A549 (cell line): ENCODE measurements at regions of chr7 and their contacts with region 1.

Region 1: GRCh38 chr7:106542550-106543220 is 118.3 kb downstream of the CCDC71L start:
- DNase-seq: peak; percentile 25 to 75
- ATAC-seq: peak; percentile 89 to 97
- H3K4me3 ChIP-seq: no peak overlapping the region
- H3K27ac ChIP-seq: peak overlapping the region in 1 of 2 experiments; percentile 20; a peak in 2 of 6 replicates
- H3K4me1 ChIP-seq: peaks cover 6% of the 10 kb centered on the region; the same call in 1 of the 3 replicates
- CTCF ChIP-seq: peak; percentile 66
- EP300 ChIP-seq: no peak
- POLR2A ChIP-seq: no peak
- RAD21 ChIP-seq: peak; percentile 68 to 70

Region 2: GRCh38 chr7:106433377-106433776 is 109.3 kb before region 1 on chr7:
- CTCF ChIA-PET with region 1: no interaction called
- POLR2A ChIA-PET with region 1: no interaction called
- DNase-seq: no peak
- ATAC-seq: no peak
- H3K4me3 ChIP-seq: no peak overlapping the region
- H3K27ac ChIP-seq: no peak overlapping the region
- H3K4me1 ChIP-seq: 0 out of 3 replicates have a peak, but pooled peaks cover 3% of the 10 kb centered on the region
- CTCF ChIP-seq: no peak
- EP300 ChIP-seq: no peak
- POLR2A ChIP-seq: no peak
- RAD21 ChIP-seq: no peak

Region 3: DNA sequence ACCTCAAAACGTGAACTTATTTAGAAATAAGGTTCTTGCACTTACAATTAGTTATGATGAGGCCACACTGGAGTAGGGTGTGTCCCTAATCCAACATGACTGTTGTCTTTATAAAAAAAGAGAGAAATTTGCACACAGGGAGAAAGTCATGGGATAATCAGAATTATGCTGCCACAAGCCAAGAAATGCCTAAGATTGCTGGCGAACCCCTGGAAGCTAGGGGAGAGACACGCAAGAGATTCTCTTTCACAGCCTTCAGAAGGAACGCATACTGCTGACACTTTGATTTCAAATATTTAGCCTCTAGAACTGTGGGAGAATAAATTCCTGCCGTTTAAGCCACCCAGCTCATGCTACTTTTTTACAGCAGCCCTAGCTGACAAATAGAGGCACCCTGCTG is 20.0 kb before region 1 on chr7:
- CTCF ChIA-PET with region 1: no interaction called
- POLR2A ChIA-PET with region 1: no interaction called
- DNase-seq: no peak
- ATAC-seq: no peak
- H3K4me3 ChIP-seq: no peak overlapping the region
- H3K27ac ChIP-seq: no peak overlapping the region
- H3K4me1 ChIP-seq: no peaks in the 10 kb centered on the region
- CTCF ChIP-seq: no peak
- EP300 ChIP-seq: no peak
- POLR2A ChIP-seq: no peak
- RAD21 ChIP-seq: no peak

Region 4: DNA sequence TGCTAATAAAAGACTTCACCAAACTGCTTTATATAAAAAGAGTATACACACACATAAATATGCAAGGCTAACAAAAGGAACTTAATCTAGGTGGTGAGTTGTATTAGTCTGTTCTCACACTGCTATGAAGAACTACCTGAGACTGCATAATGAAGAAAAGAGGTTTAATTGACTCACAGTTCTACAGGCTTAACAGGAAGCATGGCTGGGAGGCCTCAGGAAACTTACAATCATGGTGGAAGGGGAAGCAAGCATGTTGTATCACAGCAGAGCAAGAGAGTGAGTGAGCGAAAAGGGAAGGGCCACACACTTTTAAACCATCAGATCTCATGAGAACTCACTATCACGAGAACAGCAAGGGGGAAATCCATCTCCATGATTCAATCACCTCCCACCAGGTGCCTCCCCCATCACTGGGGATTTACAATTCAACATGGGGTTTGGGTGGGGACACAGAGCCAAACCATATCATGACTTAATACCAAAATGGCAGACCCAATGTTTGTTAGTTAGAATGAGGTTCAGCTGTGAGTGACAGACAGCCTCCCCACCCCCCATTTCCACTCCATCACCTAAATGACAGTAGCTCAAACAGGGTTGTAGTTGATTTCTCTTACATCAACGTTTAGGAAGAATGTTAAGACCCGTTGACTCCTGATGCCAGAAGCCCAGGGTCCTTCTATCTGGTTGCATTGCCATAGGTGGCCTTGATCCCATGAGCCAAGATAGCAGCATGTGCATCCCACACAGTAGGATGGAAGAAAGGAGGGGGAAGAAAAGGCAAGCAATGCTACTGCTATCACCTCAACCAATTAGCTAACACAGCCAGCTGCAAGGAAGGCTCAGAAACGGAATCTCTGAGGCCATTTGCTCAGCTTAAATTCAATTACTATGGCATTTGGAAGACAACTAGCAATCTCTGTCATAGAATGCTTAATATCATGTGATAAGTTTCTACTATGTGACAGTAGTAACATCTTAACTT is 41.3 kb after region 1 on chr7:
- CTCF ChIA-PET with region 1: no interaction called
- POLR2A ChIA-PET with region 1: no interaction called
- DNase-seq: no peak
- ATAC-seq: no peak
- H3K4me3 ChIP-seq: no peak overlapping the region
- H3K27ac ChIP-seq: no peak overlapping the region
- H3K4me1 ChIP-seq: no peaks in the 10 kb centered on the region
- CTCF ChIP-seq: no peak
- EP300 ChIP-seq: no peak
- POLR2A ChIP-seq: no peak
- RAD21 ChIP-seq: no peak

Region 5: DNA sequence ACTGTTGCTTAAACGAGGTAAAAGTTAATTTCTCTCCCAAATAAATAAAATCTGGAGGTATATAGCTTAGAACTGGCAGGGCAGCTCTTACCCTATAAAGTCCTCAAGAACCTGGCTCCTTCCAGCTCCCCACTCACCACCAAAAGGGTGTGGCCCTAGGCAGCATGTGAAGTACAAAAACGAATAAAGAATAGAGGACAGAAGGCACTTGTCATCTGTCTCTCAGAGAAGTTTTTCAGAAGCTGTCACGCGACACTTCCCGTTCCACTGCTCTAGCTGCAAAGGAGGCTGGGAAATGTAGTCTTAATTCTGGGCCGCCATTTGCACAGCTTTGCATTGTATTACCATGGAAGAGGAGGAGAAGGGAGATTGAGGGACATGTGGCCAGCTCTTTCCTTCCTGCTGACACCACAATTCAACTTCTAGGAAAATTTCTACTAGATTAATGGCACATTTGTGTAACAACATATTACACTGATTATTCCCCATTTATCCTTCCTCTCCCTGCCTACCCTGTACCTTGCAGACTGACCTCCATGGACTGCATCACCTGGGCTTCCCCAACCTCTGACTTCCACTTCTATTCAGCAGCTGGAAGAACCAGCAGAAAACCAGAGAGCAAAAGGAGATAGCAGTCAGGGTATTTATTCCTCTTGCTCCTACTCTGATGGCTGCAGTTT is 56.1 kb after region 1 on chr7:
- CTCF ChIA-PET with region 1: interaction called, 14 read pairs
- POLR2A ChIA-PET with region 1: no interaction called
- DNase-seq: peak; percentile 28 to 61
- ATAC-seq: peak; percentile 96 to 99
- H3K4me3 ChIP-seq: peak overlapping the region; percentile 15; the same call in 2 of the 3 replicates
- H3K27ac ChIP-seq: 0 out of 6 replicates have a peak overlapping the region, but pooled peaks of 1 of the 2 experiments have one; percentile 24
- H3K4me1 ChIP-seq: no peaks in the 10 kb centered on the region
- CTCF ChIP-seq: no peak
- EP300 ChIP-seq: no peak
- POLR2A ChIP-seq: no peak
- RAD21 ChIP-seq: no peak

Region 6: GRCh38 chr7:106652909-106653308 is 110.2 kb after region 1 on chr7:
- CTCF ChIA-PET with region 1: interaction called, 35 read pairs
- POLR2A ChIA-PET with region 1: no interaction called
- DNase-seq: no peak
- ATAC-seq: no peak
- H3K4me3 ChIP-seq: no peak overlapping the region
- H3K27ac ChIP-seq: no peak overlapping the region
- H3K4me1 ChIP-seq: no peaks in the 10 kb centered on the region
- CTCF ChIP-seq: no peak
- EP300 ChIP-seq: no peak
- POLR2A ChIP-seq: no peak
- RAD21 ChIP-seq: no peak

Region 7: DNA sequence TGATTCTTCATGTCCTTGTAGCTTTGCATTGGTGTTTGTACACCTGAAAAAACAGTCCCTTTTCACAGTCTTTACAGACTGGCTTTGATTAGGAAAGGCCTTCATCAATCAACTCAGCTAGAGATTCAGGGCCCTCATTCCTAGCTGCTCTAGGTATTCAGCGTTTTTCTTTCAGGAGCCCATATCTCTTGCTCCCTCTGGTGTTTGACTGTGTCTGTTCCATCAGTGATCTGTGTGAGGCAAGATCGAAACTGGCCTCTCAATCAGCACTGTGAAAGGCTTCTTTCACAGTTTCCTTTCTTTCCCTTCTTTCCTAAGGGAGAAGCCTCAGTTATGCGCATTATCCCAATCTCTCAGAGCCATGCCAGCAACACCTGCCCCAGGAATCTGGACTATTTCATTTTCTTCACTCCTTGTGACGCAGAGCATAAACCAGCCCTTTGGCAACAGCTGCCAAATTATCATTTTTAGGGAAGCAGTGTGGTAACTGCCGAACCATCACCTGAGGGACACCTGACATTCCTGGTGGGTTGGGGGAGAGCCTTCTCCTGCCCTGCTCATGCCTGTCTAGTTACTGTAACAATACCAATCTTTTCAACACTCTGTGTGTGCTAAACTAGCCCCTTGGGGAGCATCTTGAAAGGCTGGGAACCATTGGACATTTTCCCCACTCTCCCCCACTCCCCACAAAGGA is 194.0 kb after region 1 on chr7:
- CTCF ChIA-PET with region 1: interaction called, 34 read pairs
- POLR2A ChIA-PET with region 1: no interaction called
- DNase-seq: peak; percentile 32 to 61
- ATAC-seq: peak; percentile 91 to 96
- H3K4me3 ChIP-seq: no peak overlapping the region
- H3K27ac ChIP-seq: peak overlapping the region in 1 of 2 experiments; percentile 66; a peak in 3 of 6 replicates
- H3K4me1 ChIP-seq: no peaks in the 10 kb centered on the region
- CTCF ChIP-seq: peak; percentile 41
- EP300 ChIP-seq: no peak
- POLR2A ChIP-seq: no peak
- RAD21 ChIP-seq: peak; percentile 52 to 56